Common myeloid progenitor, CD34-positive (primary cell): ENCODE measurements at regions of chr9 and their contacts with region 1.

Region 1: DNA sequence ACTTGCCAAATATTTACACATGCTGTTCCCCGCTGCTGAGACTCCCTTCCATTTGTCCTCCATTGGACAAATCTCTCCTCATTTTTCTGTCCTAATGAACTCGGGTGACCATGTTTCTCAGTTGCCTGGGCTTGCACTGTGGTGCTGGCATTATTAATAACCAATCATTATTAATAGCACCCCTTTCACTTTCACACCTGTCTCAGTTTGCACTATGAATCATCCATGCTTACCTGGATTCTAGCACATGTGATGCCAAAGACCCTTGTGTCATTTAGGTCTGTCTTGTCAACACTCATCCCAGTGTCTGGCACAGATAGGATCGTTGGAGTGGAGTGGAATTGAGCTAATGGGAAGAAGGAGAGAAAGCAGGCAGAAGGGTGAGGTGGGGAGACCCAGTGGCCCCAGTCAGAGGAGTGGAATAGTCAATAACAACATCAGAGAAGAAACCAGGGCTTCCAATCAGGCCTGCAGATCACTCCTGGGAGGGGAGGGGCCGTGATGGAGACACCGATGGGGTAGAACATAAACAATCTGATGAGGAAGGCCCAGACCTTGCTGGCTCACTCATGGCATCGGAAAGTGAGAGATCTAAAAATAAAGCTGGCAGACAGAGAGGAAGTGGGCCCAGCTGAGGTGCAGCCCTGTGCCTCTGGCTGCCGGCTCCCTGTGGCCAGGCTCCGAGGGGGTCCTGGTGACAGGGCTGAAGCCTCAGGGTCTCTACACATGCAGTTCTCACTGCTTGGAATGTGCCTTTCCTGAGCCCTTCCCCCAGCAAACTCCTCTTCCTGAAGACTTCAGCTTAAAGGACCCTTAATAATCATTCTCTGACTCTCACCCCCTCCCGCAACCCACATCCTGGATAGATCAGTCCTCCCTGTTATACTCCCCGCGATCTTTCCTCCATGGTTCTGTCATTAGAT is 33.5 kb upstream of the CRB2 start:
- DNase-seq: peak; percentile 40 to 87 (median 78)
- H3K4me3 ChIP-seq: peak overlapping the region in 4 of 7 experiments; percentile 21 to 47 (median 40)
- H3K27ac ChIP-seq: peak overlapping the region; percentile 3 to 66
- H3K4me1 ChIP-seq: peaks cover 9 to 72% (median 45%) of the 10 kb centered on the region in 4 experiments
- H3K27me3 ChIP-seq: no peaks in the 10 kb centered on the region

Region 2: DNA sequence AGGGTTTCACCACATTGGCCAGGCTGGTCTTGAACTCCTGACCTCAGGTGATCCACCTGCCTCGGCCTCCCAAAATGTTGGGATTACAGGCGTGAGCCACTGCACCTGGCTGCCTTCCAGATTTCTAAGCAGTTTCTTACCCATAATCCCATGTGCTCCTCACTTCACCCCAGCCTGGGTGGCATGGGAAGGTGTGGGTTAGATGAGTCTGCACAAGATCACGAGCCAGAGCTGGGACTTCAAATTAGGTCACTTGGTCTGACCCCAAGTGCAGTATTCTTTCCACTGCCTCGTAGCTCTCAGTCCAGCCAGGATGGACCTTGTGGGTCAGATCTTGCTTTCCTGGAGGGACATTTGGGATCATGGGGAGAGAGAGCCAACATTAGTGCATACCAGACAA is 16.7 kb before region 1 on chr9:
- CTCF ChIA-PET with region 1: interaction called, 11 read pairs
- POLR2A ChIA-PET with region 1: no interaction called
- DNase-seq: no peak
- H3K4me3 ChIP-seq: no peak overlapping the region
- H3K27ac ChIP-seq: no peak overlapping the region
- H3K4me1 ChIP-seq: peaks cover 0 to 15% (median 2%) of the 10 kb centered on the region in 4 experiments
- H3K27me3 ChIP-seq: no peaks in the 10 kb centered on the region

Region 3: DNA sequence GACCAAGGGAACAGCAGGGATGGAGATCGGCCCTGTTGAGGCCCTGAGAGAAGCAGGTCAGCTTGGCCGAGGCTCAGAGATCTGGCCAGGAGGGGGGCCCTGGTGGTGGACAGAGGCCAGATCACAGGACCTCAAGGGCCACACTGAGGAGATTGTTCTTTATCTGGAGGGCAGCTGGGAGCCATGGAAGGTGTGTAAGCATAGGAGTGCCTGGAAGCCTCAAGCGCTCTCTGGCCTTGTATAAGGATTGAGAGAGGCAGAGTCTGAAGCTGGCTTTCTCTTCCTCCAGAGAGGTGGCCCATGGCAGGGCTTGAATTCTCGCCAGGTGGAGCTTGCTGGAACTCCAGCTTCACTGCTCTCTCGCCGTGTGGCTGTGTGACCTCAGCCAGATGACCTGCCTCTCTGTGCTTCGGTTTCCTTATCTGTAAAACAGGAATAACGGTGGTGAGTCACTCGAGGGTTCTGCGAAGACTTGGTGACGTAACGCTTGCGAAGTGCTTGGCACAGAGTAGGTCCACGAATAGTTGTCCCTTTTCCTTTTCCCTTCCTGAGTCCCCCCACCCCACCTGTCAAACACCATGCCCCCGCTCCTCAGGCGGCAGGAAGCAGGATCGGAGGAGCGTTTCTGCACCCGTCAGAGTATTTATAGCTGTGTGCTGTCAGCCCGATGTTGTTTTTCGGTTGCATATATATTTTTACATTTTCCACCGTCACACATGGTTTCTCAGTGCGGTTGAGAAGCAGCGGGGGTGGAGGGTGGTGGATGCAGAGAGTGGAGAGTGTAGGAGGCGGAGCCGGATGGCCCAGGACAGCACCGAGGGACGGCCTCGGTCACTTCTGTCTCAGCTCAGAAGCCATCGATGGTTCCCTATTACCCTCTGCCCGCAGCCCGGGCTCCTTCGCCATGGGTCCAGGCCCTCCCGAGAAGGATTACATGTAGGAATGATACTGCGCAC is 16.5 kb after region 1 on chr9:
- CTCF ChIA-PET with region 1: interaction called, 47 read pairs
- POLR2A ChIA-PET with region 1: interaction called, 4 read pairs
- DNase-seq: peak; percentile 54 to 90 (median 86)
- H3K4me3 ChIP-seq: peak overlapping the region in 6 of 7 experiments; percentile 21 to 67 (median 48)
- H3K27ac ChIP-seq: peak overlapping the region; percentile 67 to 89
- H3K4me1 ChIP-seq: peaks cover 8 to 71% (median 48%) of the 10 kb centered on the region in 4 experiments
- H3K27me3 ChIP-seq: no peaks in the 10 kb centered on the region